Naive thymus-derived CD4-positive, alpha-beta T cell (primary cell): ENCODE measurements at regions of chrX and their contacts with region 1.

Region 1: DNA sequence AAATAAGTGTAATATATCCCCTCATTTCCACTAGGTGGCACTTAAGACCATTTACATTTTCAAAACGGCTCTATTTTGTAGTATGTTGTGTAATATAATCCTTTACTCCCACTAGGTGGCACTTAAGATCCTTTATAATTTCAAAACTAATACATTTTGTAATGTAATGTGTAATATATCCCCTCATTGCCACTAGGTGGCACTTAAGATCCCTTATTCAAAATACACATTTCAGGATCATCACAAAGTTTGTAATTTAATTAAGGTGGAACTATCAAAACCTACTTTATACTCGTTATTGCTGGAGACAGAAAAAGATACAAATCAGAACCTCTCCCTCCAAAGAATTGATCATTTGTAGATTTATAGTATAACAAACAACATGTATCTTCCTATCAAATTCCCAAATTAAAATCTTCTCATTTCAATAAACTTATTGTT is 132.5 kb downstream of the ARHGAP6 start:
- DNase-seq: peak in 7 of 9 donors; percentile 35 to 82 (median 68)
- ATAC-seq: peak; percentile 99
- H3K4me3 ChIP-seq: no peak overlapping the region
- H3K4me3 Mint-ChIP-seq: no peak overlapping the region
- H3K27ac ChIP-seq: no peak overlapping the region
- H3K27ac Mint-ChIP-seq: no peak overlapping the region
- H3K4me1 ChIP-seq: no peaks in the 10 kb centered on the region
- H3K4me1 Mint-ChIP-seq: no peaks in the 10 kb centered on the region
- H3K27me3 ChIP-seq: no peaks in the 10 kb centered on the region
- H3K27me3 Mint-ChIP-seq: peaks cover 0 to 2% (median 0%) of the 10 kb centered on the region in 5 donors

Region 2: GRCh38 chrX:11143931-11144678 is 389.1 kb before region 1 on chrX:
- CTCF ChIA-PET with region 1: no interaction called
- POLR2A ChIA-PET with region 1: no interaction called
- intact Hi-C with region 1: loop called (anchors 5 to 10 kb)
- DNase-seq: peak in 8 of 9 donors; percentile 20 to 62 (median 52)
- ATAC-seq: peak; percentile 79
- H3K4me3 ChIP-seq: no peak overlapping the region
- H3K4me3 Mint-ChIP-seq: peak overlapping the region in 6 of 10 donors; percentile 10 to 59 (median 34)
- H3K27ac ChIP-seq: no peak overlapping the region
- H3K27ac Mint-ChIP-seq: no peak overlapping the region
- H3K4me1 ChIP-seq: no peaks in the 10 kb centered on the region
- H3K4me1 Mint-ChIP-seq: peaks cover 0 to 4% (median 3%) of the 10 kb centered on the region in 7 donors
- H3K27me3 ChIP-seq: no peaks in the 10 kb centered on the region
- H3K27me3 Mint-ChIP-seq: peaks cover 0 to 5% (median 0%) of the 10 kb centered on the region in 5 donors

Region 3: DNA sequence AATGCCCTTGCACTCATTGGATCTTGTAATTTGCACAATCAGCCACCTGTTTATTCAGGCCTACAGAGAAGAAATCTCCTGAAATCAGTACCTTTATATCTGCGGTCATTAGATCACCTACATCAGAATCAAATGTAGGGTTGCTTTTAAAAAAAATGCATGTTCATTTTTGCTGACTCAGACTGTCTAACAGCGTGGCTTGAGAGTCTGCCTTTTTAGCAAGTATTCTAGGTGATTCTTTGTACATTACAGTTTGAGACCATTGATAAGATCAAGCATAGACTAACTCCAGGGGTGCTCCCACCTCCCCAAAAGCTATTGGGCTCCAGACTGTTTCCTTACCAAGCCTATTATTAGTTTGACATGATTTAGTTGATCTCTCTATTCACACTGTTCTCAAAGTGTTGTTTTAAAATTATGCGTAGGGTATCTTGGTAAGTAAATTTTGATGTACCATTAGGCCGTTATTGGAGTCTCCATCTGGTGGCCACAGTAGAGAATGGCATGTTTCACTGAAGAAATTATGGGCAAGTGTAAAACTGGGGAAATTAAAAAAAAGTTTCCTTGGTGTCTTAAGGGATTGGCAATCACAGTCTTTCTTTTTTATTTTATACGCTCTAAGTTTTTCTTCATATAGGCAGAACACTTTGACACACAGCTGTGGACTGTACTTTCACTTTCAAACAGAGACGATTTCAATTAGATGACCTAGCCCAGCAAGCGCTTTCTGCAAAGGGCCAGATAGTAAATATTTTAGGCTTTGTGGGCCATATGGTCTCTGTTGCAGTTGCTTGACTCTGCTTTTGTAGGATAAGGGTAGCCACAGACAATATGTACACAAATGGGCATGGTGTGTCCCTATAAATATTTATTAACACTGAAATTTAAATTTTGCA is 191.1 kb after region 1 on chrX:
- CTCF ChIA-PET with region 1: no interaction called
- POLR2A ChIA-PET with region 1: no interaction called
- intact Hi-C with region 1: loop called (anchors 1 kb)
- DNase-seq: peak in 6 of 9 donors; percentile 2 to 41 (median 34)
- ATAC-seq: peak; percentile 51
- H3K4me3 ChIP-seq: no peak overlapping the region
- H3K4me3 Mint-ChIP-seq: peak overlapping the region in 1 of 10 donors; percentile 27
- H3K27ac ChIP-seq: no peak overlapping the region
- H3K27ac Mint-ChIP-seq: peak overlapping the region in 1 of 9 donors; percentile 24
- H3K4me1 ChIP-seq: no peaks in the 10 kb centered on the region
- H3K4me1 Mint-ChIP-seq: peaks cover 0 to 5% (median 0%) of the 10 kb centered on the region in 7 donors
- H3K27me3 ChIP-seq: no peaks in the 10 kb centered on the region
- H3K27me3 Mint-ChIP-seq: no peaks in the 10 kb centered on the region

Region 4: GRCh38 chrX:11908371-11908770 is 375.1 kb after region 1 on chrX:
- CTCF ChIA-PET with region 1: no interaction called
- POLR2A ChIA-PET with region 1: no interaction called
- intact Hi-C with region 1: loop called (anchors 1 kb)
- DNase-seq: peak in 7 of 9 donors; percentile 15 to 45 (median 31)
- ATAC-seq: peak; percentile 65
- H3K4me3 ChIP-seq: no peak overlapping the region
- H3K4me3 Mint-ChIP-seq: no peak overlapping the region
- H3K27ac ChIP-seq: no peak overlapping the region
- H3K27ac Mint-ChIP-seq: no peak overlapping the region
- H3K4me1 ChIP-seq: no peaks in the 10 kb centered on the region
- H3K4me1 Mint-ChIP-seq: peaks cover 0 to 12% (median 7%) of the 10 kb centered on the region in 7 donors
- H3K27me3 ChIP-seq: no peaks in the 10 kb centered on the region
- H3K27me3 Mint-ChIP-seq: no peaks in the 10 kb centered on the region

Region 5: GRCh38 chrX:12567857-12568256 is 1034.6 kb after region 1 on chrX:
- CTCF ChIA-PET with region 1: no interaction called
- POLR2A ChIA-PET with region 1: no interaction called
- intact Hi-C with region 1: loop called in 1 of 2 experiments (anchors 5 kb)
- DNase-seq: no peak
- ATAC-seq: no peak
- H3K4me3 ChIP-seq: no peak overlapping the region
- H3K4me3 Mint-ChIP-seq: no peak overlapping the region
- H3K27ac ChIP-seq: no peak overlapping the region
- H3K27ac Mint-ChIP-seq: no peak overlapping the region
- H3K4me1 ChIP-seq: no peaks in the 10 kb centered on the region
- H3K4me1 Mint-ChIP-seq: no peaks in the 10 kb centered on the region
- H3K27me3 ChIP-seq: no peaks in the 10 kb centered on the region
- H3K27me3 Mint-ChIP-seq: no peaks in the 10 kb centered on the region

Region 6: GRCh38 chrX:12701628-12702027 is 1168.4 kb after region 1 on chrX:
- CTCF ChIA-PET with region 1: no interaction called
- POLR2A ChIA-PET with region 1: no interaction called
- intact Hi-C with region 1: loop called in 1 of 2 experiments (anchors 2 kb)
- DNase-seq: peak in 2 of 9 donors; percentile 5 to 21
- ATAC-seq: no peak
- H3K4me3 ChIP-seq: no peak overlapping the region
- H3K4me3 Mint-ChIP-seq: no peak overlapping the region
- H3K27ac ChIP-seq: no peak overlapping the region
- H3K27ac Mint-ChIP-seq: peak overlapping the region in 1 of 9 donors; percentile 60
- H3K4me1 ChIP-seq: no peaks in the 10 kb centered on the region
- H3K4me1 Mint-ChIP-seq: peaks cover 0 to 4% (median 0%) of the 10 kb centered on the region in 7 donors
- H3K27me3 ChIP-seq: no peaks in the 10 kb centered on the region
- H3K27me3 Mint-ChIP-seq: peaks cover 5 to 14% (median 9%) of the 10 kb centered on the region in 5 donors